Caco-2 (cell line): ENCODE measurements at regions of chr16 and their contacts with region 1.

Region 1: DNA sequence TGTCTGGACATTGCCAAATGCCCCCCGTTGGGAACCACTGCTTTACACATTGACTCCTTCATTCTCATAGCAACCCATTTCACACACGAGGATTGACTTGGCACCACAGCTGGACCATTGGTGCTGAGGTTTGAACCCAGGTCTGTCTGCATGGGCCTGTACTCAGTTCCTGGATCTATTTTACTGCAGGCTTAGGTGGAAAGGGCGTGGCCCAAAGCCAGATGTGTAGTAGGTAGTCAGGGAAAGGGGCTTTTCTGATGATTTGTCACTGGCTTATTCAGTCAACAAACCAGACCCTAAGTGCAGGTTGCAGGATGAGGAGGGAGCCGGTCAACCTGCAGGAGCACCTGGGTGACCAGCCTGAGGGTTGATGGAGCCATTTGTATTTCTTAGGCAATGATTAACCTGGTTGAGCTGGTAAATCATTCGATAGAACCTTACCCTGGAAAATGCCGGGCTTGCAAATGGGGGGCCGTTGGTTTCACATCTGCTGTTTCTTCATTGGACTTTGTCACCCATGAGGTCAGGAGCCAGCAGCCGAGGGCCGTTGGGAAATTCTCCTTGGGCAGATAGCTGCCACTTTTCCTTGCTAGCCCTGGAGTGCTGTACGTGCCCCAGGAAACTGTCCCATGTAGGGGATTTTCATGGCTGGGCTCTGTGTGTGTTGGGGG is 104.4 kb downstream of the CMIP start:
- DNase-seq: peak; percentile 93
- H3K4me3 ChIP-seq: peak overlapping the region; percentile 13; the same call in 1 of the 2 replicates
- H3K4me3 Mint-ChIP-seq: peak overlapping the region; percentile 66
- H3K27ac Mint-ChIP-seq: peak overlapping the region; percentile 92
- H3K4me1 ChIP-seq: peaks cover 50% of the 10 kb centered on the region
- H3K4me1 Mint-ChIP-seq: peaks cover 53% of the 10 kb centered on the region
- H3K27me3 ChIP-seq: no peaks in the 10 kb centered on the region
- H3K27me3 Mint-ChIP-seq: no peaks in the 10 kb centered on the region
- CTCF ChIP-seq: no peak

Region 2: DNA sequence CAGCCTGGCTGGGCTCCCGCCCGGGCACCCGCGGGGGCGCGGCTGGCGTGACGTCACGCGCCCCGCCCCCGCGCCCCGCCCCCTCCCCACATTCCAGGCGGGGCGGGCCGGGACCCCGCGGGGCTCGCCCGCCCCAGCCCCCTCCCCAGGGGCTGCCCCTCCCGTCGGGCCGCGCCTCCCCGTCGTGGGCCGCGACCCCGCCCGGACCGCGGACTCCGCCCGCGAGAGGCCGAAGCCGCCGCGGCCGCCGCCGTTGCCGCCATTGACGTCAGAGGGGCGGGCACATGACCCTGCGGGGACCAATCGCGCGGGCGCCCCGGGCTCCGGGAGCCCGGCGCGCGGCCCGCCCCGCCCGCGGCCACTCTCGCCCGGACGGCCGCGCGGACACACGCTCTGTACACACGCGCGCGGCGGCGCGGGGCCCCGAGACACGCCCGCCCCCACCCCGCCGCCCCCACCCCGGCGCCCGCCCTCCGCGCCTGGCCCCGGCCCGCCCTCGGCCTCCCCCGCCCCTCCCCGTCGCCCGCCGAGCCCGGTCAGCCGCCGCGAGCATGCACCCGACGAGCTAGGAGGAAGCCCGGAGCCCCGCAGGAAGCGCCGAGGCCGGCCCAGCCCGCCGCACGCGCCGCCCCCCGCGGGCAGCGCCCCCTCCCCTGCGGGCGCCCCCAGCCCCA is 104.4 kb before region 1 on chr16 and contains the start of gene CMIP:
- CTCF ChIA-PET with region 1: no interaction called
- POLR2A ChIA-PET with region 1: interaction called, 5 read pairs
- intact Hi-C with region 1: loop called (anchors 2 kb)
- DNase-seq: peak; percentile 89 to 96
- H3K4me3 ChIP-seq: peak within 1 kb of the TSS; percentile 92
- H3K4me3 Mint-ChIP-seq: peak within 1 kb of the TSS; percentile 84
- H3K27ac Mint-ChIP-seq: peak within 1 kb of the TSS; percentile 93
- H3K4me1 ChIP-seq: peaks cover 55% of the 10 kb centered on the region
- H3K4me1 Mint-ChIP-seq: peaks cover 34% of the 10 kb centered on the region
- H3K27me3 ChIP-seq: no peaks in the 10 kb centered on the region
- H3K27me3 Mint-ChIP-seq: no peaks in the 10 kb centered on the region
- CTCF ChIP-seq: no peak
- total RNA-seq, gene CMIP: 63.7 and 68.0 TPM in 2 replicates

Region 3: DNA sequence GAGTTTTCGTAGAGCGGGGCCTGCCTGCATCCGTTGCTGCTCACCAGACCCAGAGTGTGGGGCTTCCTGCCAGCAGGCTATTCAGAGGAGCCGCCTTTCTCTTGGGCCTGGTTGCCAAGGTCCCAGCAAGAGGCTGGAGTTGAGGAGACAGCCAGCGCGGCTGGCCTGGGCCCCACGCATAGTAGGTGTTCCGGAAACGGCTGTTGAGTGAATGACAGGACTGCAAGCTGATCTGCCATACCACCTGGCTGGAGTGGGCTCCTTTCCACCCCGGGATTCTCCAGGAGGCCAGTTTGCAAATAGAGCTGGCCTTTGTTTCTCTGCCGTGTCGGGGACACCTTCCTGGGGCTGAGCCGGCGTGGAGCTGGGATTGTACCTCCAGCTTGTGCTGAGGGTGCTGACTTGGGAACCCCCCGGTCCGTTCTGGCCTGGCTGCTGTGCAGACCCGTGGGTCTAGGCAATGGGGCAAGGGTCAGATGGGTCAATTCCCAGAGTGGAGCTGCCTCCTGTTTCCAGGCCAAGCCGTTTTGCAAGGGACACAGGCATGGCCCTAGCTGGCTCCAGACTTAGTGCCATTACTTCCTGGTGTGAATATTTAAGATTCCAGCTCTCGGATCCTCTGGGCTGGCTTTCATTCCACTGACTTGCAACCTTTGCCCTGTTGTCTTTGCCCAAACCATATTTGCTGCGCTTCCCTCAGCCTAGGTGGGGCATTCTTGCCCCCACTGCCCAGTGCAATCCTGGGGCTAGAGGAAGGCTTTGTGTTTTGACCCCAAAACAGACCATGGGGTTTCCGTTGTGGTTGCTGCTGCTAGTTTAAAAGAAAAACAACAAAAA is 35.6 kb before region 1 on chr16:
- CTCF ChIA-PET with region 1: no interaction called
- POLR2A ChIA-PET with region 1: no interaction called
- intact Hi-C with region 1: loop called (anchors 2 kb)
- DNase-seq: peak; percentile 69 to 80
- H3K4me3 ChIP-seq: no peak overlapping the region
- H3K4me3 Mint-ChIP-seq: peak overlapping the region; percentile 16
- H3K27ac Mint-ChIP-seq: peak overlapping the region; percentile 86
- H3K4me1 ChIP-seq: peaks cover 37% of the 10 kb centered on the region
- H3K4me1 Mint-ChIP-seq: peaks cover 22% of the 10 kb centered on the region
- H3K27me3 ChIP-seq: no peaks in the 10 kb centered on the region
- H3K27me3 Mint-ChIP-seq: no peaks in the 10 kb centered on the region
- CTCF ChIP-seq: no peak

Region 4: GRCh38 chr16:81531419-81531821 is 17.6 kb before region 1 on chr16:
- CTCF ChIA-PET with region 1: no interaction called
- POLR2A ChIA-PET with region 1: interaction called, 3 read pairs
- intact Hi-C with region 1: loop called (anchors 2 kb)
- DNase-seq: peak; percentile 30 to 87
- H3K4me3 ChIP-seq: no peak overlapping the region
- H3K4me3 Mint-ChIP-seq: no peak overlapping the region
- H3K27ac Mint-ChIP-seq: peak overlapping the region; percentile 58
- H3K4me1 ChIP-seq: peaks cover 33% of the 10 kb centered on the region
- H3K4me1 Mint-ChIP-seq: peaks cover 37% of the 10 kb centered on the region
- H3K27me3 ChIP-seq: no peaks in the 10 kb centered on the region
- H3K27me3 Mint-ChIP-seq: no peaks in the 10 kb centered on the region
- CTCF ChIP-seq: no peak

Region 5: DNA sequence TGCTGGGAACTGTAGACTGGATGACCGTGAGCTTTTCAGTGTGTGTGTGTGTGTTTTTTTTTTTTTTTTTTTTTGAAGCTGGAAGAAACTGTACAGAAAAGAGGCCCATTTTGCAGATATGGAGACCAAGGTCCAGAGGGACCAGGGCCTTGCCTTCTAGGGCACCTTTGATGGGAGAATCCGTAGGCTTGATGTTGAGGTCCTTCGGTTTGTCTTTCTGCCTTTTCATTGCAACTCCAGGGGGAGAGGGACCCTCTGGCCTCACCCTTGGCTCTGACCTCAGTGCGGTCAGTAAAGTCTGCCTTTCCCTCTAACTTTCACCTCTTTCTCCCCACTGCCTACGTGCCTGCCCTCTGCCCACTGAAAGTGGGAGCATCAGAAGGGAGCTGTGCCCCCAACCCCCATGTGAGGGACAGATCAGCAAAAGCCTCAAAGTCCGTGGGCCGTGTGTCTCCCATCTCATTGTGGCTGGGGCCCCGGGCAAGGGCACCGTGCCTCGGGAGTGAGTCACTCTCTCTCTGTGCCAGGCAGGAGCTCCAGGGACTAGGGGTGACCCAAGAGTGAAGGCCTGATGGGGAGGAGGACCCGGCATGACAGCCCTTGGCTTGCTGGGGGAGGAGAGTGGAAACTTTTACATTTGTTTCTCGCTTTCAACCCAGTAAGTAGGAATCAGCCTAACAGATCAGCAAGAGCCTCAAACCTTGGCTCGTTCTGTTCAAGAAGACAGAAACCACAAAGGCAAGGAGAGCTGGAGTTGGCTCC is 19.2 kb after region 1 on chr16:
- CTCF ChIA-PET with region 1: interaction called, 11 read pairs
- POLR2A ChIA-PET with region 1: no interaction called
- intact Hi-C with region 1: no loop called
- DNase-seq: no peak
- H3K4me3 ChIP-seq: no peak overlapping the region
- H3K4me3 Mint-ChIP-seq: no peak overlapping the region
- H3K27ac Mint-ChIP-seq: peak overlapping the region; percentile 5
- H3K4me1 ChIP-seq: no peaks in the 10 kb centered on the region; the same call in 1 of the 2 replicates
- H3K4me1 Mint-ChIP-seq: peaks cover 19% of the 10 kb centered on the region
- H3K27me3 ChIP-seq: no peaks in the 10 kb centered on the region
- H3K27me3 Mint-ChIP-seq: no peaks in the 10 kb centered on the region
- CTCF ChIP-seq: no peak

Region 6: GRCh38 chr16:81575361-81575811 is 26.4 kb after region 1 on chr16:
- CTCF ChIA-PET with region 1: no interaction called
- POLR2A ChIA-PET with region 1: interaction called, 13 read pairs
- intact Hi-C with region 1: no loop called
- DNase-seq: no peak
- H3K4me3 ChIP-seq: no peak overlapping the region
- H3K4me3 Mint-ChIP-seq: no peak overlapping the region
- H3K27ac Mint-ChIP-seq: no peak overlapping the region
- H3K4me1 ChIP-seq: no peaks in the 10 kb centered on the region; the same call in none of the 2 replicates
- H3K4me1 Mint-ChIP-seq: no peaks in the 10 kb centered on the region
- H3K27me3 ChIP-seq: no peaks in the 10 kb centered on the region
- H3K27me3 Mint-ChIP-seq: no peaks in the 10 kb centered on the region
- CTCF ChIP-seq: no peak

Region 7: DNA sequence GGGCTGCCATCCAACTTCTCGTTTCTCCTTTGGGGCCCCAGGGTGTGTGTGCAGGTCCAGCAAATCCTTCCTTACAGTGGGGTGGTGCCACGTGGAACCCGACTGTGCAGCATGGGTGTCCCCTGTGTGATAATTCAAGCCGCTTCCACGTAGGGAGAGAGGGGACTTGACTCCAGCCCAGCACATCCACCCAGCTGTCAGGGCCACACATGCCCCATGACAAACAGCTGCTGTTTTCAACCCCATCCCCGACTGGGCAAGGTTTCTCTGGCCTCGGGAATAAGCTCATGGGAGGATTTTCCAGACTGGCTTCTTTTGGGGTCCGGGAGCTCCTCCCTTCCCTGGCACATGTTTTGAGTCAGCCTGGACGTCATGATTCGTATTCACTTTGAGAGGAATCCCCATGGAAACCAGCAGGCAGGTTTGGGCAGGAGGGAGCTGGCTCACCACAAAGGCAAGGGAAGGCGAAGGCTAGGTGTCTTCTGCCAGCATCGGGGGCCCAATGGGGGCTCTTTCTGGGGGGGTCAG is 52.0 kb after region 1 on chr16:
- CTCF ChIA-PET with region 1: no interaction called
- POLR2A ChIA-PET with region 1: interaction called, 4 read pairs
- intact Hi-C with region 1: loop called (anchors 1 kb)
- DNase-seq: no peak
- H3K4me3 ChIP-seq: no peak overlapping the region
- H3K4me3 Mint-ChIP-seq: no peak overlapping the region
- H3K27ac Mint-ChIP-seq: peak overlapping the region; percentile 97
- H3K4me1 ChIP-seq: peaks cover 53% of the 10 kb centered on the region
- H3K4me1 Mint-ChIP-seq: peaks cover 51% of the 10 kb centered on the region
- H3K27me3 ChIP-seq: no peaks in the 10 kb centered on the region
- H3K27me3 Mint-ChIP-seq: no peaks in the 10 kb centered on the region
- CTCF ChIP-seq: no peak